ENCODE measurements at regions of chr11 and their contacts with region 1.

Region 1: DNA sequence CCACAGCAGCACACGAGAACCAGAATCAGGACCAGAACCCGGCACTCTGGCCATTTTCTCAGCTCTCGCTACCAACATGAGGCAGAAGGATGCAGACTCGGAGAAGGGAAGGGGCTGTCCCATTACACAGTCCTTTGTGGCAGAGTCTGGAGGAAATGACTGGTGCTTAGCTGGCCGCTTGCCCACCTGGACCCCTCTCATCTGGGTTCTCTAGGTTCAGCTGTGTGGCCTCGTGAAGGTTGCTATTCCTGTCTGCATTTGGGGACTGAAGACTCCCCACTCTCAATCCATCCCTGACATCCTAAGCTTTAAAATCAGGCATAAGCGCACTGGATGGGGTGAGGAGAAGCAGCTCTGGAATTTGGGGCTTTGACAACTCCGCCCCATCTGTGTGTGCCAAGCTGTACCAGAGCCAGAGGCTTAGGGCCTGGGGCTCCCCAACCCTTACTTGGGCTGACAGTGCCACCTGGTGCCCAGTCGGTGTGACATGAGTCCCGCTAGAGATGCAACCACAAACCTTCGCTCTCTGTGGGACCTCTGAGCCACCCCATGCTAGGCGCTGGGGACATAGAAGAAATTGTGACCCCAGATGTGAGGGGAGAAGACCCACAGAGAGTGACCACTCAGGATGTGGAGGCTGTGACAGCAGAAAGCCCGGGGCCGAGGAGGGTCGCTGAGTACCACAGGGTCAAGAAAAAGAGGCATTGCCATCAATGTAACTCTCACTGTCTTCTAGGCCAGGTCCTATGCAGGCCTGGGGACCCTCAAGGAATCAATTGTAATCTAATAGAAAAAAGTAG is 35.9 kb upstream of the FCHSD2 start:
- DNase-seq: peak; percentile 89
- ATAC-seq: peak; percentile 97
- H3K4me3 Mint-ChIP-seq: no peak overlapping the region
- H3K27ac Mint-ChIP-seq: no peak overlapping the region
- H3K4me1 Mint-ChIP-seq: peaks cover 35% of the 10 kb centered on the region
- H3K27me3 Mint-ChIP-seq: peaks cover 28% of the 10 kb centered on the region

Region 2: GRCh38 chr11:72722050-72722748 is 455.8 kb before region 1 on chr11:
- CTCF ChIA-PET with region 1: interaction called, 36 read pairs
- DNase-seq: peak; percentile 93
- ATAC-seq: peak; percentile 92
- H3K4me3 Mint-ChIP-seq: peak overlapping the region; percentile 99
- H3K27ac Mint-ChIP-seq: peak overlapping the region; percentile 99
- H3K4me1 Mint-ChIP-seq: peaks cover 59% of the 10 kb centered on the region
- H3K27me3 Mint-ChIP-seq: no peaks in the 10 kb centered on the region

Region 3: DNA sequence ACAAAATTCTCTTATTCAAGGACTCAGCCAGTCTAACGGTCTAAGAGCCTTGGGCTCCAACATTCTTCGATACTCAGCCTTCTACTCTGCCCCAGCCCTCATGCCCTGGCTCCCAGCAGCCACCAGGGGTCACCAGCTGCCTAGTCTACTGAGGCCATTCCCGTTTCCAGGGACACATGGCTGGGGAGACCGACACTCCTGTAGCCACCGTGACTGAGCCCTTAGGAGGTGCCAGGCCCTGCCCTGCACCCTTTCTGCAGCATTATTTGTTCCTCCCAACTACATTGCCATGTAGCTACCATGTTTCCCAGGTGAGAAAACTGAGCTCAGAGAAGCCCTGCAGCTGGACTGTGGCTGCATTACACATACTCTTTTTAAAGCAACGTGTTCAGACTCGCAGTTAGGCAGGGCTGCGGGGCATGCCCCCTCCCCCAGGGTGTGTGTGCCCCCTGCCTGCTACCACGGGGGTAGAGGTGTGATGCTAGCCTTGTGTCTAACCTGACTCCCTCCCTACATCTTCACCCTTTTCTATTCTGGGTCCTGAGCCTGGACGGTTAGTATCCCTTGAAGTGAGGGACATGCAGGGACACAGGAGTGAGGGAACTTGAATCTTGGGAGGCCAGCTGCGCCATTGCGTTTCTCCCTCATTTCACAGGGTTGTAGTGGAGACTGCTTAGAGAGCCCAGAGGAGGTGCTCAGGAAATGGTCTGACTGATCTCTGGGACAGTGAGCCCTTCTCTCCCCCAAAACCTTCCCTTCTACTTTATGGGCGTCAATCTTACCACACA is 346.3 kb before region 1 on chr11:
- CTCF ChIA-PET with region 1: interaction called, 58 read pairs
- DNase-seq: peak; percentile 67
- ATAC-seq: peak; percentile 54
- H3K4me3 Mint-ChIP-seq: no peak overlapping the region
- H3K27ac Mint-ChIP-seq: peak overlapping the region; percentile 37
- H3K4me1 Mint-ChIP-seq: peaks cover 34% of the 10 kb centered on the region
- H3K27me3 Mint-ChIP-seq: no peaks in the 10 kb centered on the region

Region 4: DNA sequence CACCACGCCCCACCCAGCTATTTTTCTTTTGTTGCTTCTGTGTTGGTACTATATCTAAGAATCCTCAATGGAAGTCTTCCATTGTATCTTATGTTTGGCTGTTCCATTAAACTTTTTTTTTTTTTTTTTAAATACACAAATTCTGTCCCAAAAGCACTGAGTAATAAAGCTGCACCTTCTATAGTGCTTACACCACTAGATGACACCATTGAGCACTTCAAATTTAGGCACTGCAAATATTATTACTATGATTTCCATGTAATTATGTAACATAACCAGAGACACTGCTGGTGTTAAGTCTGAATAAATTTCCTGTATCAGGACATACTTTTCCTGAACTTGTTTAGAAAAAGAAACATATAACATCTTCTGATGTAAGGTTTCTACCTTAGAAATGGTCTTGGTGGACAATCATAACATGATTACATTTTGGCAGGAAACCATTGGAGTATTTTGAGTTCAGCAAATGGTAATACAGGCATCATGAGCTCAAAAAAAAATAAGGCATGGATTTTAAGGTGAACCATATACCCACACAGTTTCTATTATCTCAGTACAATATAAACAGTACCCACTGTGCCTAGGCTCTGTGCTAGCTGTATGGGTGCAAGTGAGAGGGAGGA is 253.3 kb before region 1 on chr11:
- CTCF ChIA-PET with region 1: interaction called, 39 read pairs
- DNase-seq: no peak
- ATAC-seq: no peak
- H3K4me3 Mint-ChIP-seq: no peak overlapping the region
- H3K27ac Mint-ChIP-seq: no peak overlapping the region
- H3K4me1 Mint-ChIP-seq: peaks cover 5% of the 10 kb centered on the region
- H3K27me3 Mint-ChIP-seq: no peaks in the 10 kb centered on the region

Region 5: DNA sequence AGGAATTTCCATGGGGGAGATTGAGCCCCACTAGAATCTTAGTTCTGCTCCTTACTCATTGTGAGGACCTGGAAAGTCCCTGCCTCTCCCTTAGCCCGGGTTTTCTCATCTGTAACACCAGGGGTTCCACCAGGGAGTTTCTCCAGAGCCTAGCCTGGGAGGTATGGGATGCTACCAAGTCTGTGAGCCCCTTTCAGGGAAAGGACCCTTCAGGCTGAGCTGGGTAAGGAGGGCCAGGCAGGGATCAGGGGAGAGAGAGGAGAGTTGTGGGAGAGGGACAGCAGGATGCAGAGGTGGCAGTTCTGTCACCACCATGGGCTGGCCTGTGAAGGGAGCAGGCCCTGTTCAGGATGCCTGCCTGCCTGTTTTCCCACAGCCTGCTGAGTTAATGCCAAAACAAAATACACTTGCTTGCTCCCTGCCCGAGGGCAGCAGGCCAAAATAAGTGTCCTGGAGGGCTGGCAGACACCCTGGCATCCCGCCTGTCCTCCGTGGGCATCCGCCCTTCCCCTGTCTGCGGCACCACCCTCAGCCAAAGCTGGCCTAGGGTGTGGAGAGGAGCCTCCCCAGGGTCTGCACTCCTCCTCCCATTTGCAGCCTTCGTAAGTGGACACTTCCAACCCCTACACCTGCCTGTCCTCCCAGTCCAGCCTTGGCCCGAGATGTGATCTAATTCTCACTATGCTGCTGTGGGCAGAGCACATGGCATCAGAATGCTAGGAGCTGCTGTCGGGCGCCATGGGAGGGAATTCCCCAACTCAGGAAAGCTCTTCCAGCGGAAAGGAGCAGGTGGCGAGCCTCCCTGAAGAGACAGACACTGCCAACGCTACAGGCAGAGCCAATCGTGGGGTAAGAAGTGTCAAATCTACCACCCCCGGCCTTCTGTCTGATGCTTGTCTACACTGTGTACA is 30.0 kb before region 1 on chr11:
- CTCF ChIA-PET with region 1: interaction called, 74 read pairs
- DNase-seq: no peak
- ATAC-seq: no peak
- H3K4me3 Mint-ChIP-seq: no peak overlapping the region
- H3K27ac Mint-ChIP-seq: no peak overlapping the region
- H3K4me1 Mint-ChIP-seq: peaks cover 58% of the 10 kb centered on the region
- H3K27me3 Mint-ChIP-seq: no peaks in the 10 kb centered on the region

Region 6: DNA sequence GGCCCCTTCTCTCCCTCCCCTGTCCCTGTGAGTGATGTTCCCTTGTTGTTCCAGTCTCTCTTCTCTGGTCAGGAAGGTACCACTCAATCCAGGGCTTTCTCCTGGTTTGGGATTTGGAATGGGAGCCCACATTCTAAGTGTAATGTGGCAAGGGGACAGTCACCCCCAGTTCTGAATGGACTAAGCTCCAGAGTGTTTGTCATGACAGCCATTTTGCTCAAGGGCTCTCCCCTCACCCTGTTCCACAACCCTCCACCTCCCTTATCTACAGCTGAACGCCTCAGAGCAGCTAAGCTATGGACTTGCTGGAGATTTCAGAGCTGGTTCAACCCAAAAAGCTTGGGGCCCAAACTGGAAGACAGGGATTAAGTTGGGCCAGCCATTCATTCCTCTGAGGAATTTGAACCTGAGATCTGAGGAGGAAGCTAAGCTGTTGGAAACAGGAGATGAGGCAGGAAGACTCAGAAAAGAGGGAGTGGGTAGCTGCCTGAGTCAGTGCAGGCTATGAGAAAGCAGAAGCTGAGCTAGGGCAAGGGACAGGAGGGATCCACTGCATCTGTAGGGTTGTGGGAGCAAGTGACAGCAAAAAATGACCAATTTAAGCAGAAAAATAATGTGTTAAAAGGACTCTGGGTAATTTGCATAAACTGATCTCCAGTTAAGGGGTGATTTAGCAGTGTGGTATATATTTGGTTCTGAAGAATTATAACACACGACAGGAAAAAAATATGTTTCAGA is 13.0 kb before region 1 on chr11:
- CTCF ChIA-PET with region 1: interaction called, 23 read pairs
- DNase-seq: no peak
- ATAC-seq: no peak
- H3K4me3 Mint-ChIP-seq: no peak overlapping the region
- H3K27ac Mint-ChIP-seq: no peak overlapping the region
- H3K4me1 Mint-ChIP-seq: peaks cover 6% of the 10 kb centered on the region
- H3K27me3 Mint-ChIP-seq: peaks cover 10% of the 10 kb centered on the region

Region 7: DNA sequence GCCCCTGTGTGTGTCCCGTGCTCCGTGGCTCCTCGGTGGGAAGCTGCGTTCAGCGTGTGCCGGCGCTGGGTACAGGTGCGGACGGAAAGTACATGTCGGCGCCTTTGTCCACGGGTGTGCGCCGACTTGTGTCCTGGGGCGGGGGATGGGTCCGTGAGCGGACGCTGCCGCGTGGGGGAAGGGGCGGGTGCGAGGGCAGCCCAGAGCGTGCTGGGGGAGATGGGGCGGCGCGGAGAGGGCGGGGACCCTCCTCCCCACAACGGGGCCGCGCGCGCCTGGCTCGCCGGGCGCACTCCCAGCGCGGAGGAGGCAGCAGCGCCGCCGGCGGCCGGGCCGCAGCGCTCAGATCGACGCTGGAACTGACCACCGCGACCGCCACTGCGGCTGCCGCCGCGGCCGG is 164.7 kb after region 1 on chr11:
- CTCF ChIA-PET with region 1: no interaction called
- DNase-seq: no peak
- ATAC-seq: no peak
- H3K4me3 Mint-ChIP-seq: no peak overlapping the region
- H3K27ac Mint-ChIP-seq: no peak overlapping the region
- H3K4me1 Mint-ChIP-seq: no peaks in the 10 kb centered on the region
- H3K27me3 Mint-ChIP-seq: peaks cover 3% of the 10 kb centered on the region

Measured in activated CD8-positive, alpha-beta memory T cell treated with anti-CD3 and anti-CD28 coated beads, Interleukin-2, amount 10 ng/mL, durations not matched to agents 7 days and 5 days (primary cell).